Cardiac septum (tissue), 1 donor: ENCODE measurements at regions of chr17 and their contacts with region 1.

Region 1: DNA sequence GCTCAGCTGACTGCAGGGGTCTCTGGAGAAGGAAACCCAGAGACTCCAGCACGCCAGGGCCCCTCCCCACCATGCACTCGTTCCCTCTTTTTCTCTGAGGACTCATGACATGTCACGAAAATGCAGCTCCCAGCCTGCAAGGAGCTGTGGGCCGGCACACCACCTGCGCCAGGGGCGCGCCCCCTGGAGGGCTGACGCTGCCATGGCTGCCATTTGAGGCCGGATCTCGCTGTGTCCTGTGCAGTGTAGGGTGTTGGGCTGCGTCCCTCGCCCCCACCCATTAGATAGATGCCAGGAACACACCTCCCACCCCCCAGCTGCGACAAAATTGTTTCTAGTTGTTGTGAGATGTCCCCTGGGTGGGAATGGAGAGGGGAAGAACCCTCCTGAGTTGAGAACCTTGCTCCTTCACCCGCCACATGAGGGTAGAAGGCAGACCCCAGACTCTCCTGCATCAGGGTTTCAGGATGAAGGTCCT is 8.2 kb downstream of the SYNGR2 start:
- DNase-seq: peak; percentile 92

Region 2: GRCh38 chr17:78140169-78140976 is 36.2 kb before region 1 on chr17:
- intact Hi-C with region 1: loop called (anchors 5 kb)
- DNase-seq: peak; percentile 98

Region 3: DNA sequence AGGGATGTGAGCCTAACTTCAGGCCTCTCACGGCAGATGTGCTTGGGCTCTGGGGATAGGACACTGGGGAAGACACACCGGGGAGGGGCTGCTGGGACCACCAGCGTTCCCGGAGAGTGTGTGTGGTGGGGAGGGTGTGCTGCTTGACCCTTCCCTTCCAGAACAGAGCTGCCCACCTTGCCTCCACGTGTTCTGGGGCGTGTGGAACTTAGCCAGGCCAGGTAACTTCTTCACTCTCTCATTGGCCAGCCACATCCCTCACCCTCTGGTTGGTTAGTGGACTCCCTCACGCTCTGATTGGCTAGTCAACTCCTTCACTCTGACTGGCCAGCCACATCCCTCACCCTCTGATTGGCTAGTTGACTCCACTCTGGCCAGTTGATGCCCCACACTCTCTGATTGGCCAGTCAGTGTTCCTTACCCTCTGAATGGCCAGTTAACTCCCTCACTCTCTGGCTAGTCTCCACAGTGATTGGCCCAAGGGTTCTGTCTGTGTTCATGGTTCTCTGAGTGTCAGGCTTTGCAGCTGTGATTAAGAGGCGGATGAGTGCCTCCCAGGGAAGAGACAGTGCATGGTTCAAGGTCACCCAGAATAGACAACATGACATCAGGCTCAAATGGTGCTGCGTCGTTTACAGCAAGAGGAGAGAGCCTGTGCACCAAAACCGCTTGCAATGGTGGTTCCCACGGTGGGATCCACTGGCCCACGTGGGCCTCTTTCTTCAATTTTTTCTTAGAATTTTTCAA is 64.9 kb after region 1 on chr17:
- intact Hi-C with region 1: no loop called
- DNase-seq: no peak

Region 4: GRCh38 chr17:78313735-78314648 is 137.4 kb after region 1 on chr17:
- intact Hi-C with region 1: no loop called
- DNase-seq: peak; percentile 83